ENCODE measurements at regions of chr21 and their contacts with region 1.

Region 1: GRCh38 chr21:45287438-45288391 is at the start of gene POFUT2:
- DNase-seq: peak; percentile 97
- H3K4me3 ChIP-seq: peak within 1 kb of the TSS; percentile 67 to 93 (median 79)
- H3K27ac ChIP-seq: peak within 1 kb of the TSS; percentile 56
- H3K4me1 ChIP-seq: peaks cover 20% of the 10 kb centered on the region
- H3K27me3 ChIP-seq: no peaks in the 10 kb centered on the region
- CTCF ChIP-seq: peak in 1 of 2 donors; percentile 2
- POLR2A ChIP-seq: peak; percentile 89
- total RNA-seq, gene POFUT2: 47.5 and 48.9 TPM in 2 replicates

Region 2: DNA sequence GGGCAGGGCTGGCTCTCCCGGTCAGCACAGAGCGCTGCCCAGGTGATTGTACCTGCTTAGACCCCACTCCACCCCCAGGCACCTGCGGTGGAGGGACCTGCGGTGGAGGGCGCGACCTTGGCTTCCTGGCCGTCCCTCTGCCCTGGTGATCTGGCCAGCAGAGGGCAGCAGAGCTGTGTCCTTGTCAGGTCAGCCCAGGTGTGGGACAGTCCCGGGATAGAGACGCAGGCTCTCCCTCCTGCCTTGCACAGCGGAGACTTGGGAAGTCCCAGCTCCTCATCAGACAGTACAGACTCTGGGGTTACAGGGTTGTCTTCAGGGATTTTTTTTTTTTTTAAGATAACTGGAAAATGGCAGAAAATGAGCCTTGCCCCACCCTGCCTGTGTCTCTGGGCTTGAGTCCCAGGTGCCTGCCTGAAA is 337.9 kb before region 1 on chr21:
- CTCF ChIA-PET with region 1: no interaction called
- POLR2A ChIA-PET with region 1: no interaction called
- dilution Hi-C with region 1: no loop called
- intact Hi-C with region 1: loop called (anchors 5 kb)
- DNase-seq: peak; percentile 54
- H3K4me3 ChIP-seq: no peak overlapping the region
- H3K27ac ChIP-seq: no peak overlapping the region
- H3K4me1 ChIP-seq: peaks cover 3% of the 10 kb centered on the region
- H3K27me3 ChIP-seq: no peaks in the 10 kb centered on the region
- CTCF ChIP-seq: peak; percentile 88 to 89
- POLR2A ChIP-seq: no peak

Region 3: DNA sequence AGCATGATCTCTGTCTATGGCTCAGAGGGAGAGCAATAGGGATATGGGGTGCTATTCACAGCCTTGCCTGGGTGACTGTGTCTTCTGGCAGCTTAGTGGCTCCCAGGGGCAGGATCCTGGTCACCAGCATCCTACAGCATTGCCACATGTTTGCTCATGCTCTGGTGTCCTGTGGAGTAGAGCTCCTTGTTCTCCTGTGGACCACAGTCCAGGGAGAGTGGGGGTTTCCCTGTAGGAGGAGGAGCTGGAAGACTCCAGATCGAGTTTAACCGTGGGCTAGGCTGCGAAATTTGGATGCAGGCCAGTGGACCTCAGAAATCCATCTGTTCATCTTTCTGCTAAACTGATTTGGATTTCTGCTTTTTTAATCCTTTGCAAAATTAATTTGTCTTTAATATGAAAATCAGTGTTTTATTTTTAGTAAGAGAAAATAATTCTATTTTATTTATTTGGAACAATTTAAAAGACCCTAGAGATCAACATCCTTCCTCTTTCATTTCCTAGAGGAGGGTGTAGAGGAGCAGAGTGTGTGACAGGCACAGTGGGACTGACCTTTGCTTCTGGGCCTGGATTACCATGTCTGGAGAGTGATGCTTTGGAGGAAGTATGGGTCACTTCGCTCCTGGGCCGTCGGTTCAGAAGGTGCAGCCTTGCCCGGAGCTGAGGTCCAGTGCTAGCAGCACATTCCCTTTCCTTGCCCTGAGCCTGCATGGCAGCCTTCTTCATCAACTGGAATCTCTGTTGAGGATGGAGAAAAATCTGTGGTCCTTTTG is 196.0 kb before region 1 on chr21:
- CTCF ChIA-PET with region 1: no interaction called
- POLR2A ChIA-PET with region 1: no interaction called
- dilution Hi-C with region 1: no loop called
- intact Hi-C with region 1: no loop called
- DNase-seq: no peak
- H3K4me3 ChIP-seq: no peak overlapping the region
- H3K27ac ChIP-seq: no peak overlapping the region
- H3K4me1 ChIP-seq: peaks cover 55% of the 10 kb centered on the region
- H3K27me3 ChIP-seq: no peaks in the 10 kb centered on the region
- CTCF ChIP-seq: no peak
- POLR2A ChIP-seq: no peak

Region 4: GRCh38 chr21:45330075-45330781 is 42.5 kb after region 1 on chr21:
- CTCF ChIA-PET with region 1: no interaction called
- POLR2A ChIA-PET with region 1: no interaction called
- dilution Hi-C with region 1: no loop called
- intact Hi-C with region 1: no loop called
- DNase-seq: no peak
- H3K4me3 ChIP-seq: no peak overlapping the region
- H3K27ac ChIP-seq: no peak overlapping the region
- H3K4me1 ChIP-seq: no peaks in the 10 kb centered on the region
- H3K27me3 ChIP-seq: no peaks in the 10 kb centered on the region
- CTCF ChIP-seq: no peak
- POLR2A ChIP-seq: no peak

Region 5: DNA sequence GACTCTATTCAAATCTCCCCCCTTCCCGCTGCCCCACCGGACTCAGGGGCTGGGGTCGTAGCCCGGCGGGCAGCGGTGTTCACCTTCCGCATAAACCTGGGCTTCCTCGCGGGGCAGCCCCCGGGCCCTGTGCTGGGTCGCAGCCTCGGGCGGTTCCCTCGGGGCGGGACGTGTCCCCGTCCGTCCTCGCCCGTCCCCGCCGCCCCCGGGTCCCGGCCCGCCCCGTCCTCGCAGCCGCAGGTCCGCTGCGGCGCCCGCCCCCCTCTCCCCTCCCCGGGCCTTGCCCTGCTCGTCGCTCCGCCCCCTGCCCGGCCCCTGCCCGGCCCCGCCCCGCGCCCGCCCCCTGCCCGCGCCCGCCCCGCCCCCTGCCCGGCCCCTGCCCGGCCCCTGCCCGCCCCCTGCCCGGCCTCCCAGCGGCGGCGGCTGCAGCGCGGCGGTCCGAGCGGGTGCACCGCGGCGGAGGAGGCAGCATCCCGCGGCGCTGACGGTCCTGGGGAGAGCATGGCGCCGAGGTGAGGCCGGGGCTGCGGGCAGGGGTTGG is 117.1 kb after region 1 on chr21 and contains the start of gene COL18A1:
- CTCF ChIA-PET with region 1: interaction called, 15 read pairs
- POLR2A ChIA-PET with region 1: interaction called, 3 read pairs
- dilution Hi-C with region 1: no loop called
- intact Hi-C with region 1: loop called (anchors 1 kb)
- DNase-seq: peak; percentile 39
- H3K4me3 ChIP-seq: peak within 1 kb of the TSS; percentile 72 to 87 (median 79)
- H3K27ac ChIP-seq: peak within 1 kb of the TSS; percentile 95
- H3K4me1 ChIP-seq: peaks cover 18% of the 10 kb centered on the region
- H3K27me3 ChIP-seq: no peaks in the 10 kb centered on the region
- CTCF ChIP-seq: no peak
- POLR2A ChIP-seq: no peak
- total RNA-seq, gene COL18A1: 252 and 274 TPM in 2 replicates

Region 6: GRCh38 chr21:45439161-45439872 is 151.6 kb after region 1 on chr21:
- CTCF ChIA-PET with region 1: interaction called, 34 read pairs
- POLR2A ChIA-PET with region 1: no interaction called
- dilution Hi-C with region 1: no loop called
- intact Hi-C with region 1: loop called (anchors 1 kb)
- DNase-seq: peak; percentile 91
- H3K4me3 ChIP-seq: peak overlapping the region in 2 of 3 experiments; percentile 7 to 26
- H3K27ac ChIP-seq: peak overlapping the region; percentile 82
- H3K4me1 ChIP-seq: peaks cover 15% of the 10 kb centered on the region
- H3K27me3 ChIP-seq: no peaks in the 10 kb centered on the region
- CTCF ChIP-seq: peak; percentile 94 to 96
- POLR2A ChIP-seq: no peak

Region 7: DNA sequence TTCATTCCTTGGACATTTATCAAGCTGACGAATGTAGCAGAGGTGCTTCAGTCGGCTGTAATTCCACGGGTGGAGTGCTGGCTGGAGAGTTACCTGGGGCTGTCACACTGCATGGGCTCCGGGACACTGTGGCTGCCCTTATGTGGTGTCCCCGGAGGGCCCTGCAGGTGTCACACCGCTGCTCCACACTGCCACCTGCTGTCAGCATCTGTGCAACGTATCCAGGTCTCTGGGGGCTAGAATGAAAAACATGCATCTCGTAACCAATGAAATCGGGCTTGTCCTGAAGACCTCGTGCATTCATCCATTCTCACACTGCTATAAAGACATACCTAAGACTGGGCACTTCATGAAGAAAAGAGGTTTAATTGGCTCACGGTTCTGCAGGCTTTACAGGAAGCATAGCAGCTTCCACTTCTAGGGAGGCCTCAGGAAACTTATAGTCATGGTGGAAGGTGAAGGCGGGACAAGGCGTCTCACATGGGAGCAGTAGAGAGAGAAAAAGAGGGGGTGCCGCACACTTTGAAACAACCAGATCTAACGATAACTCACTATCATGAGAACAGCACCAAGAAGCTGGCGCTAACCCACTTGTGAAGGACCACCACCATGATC is 309.1 kb after region 1 on chr21:
- CTCF ChIA-PET with region 1: interaction called, 17 read pairs
- POLR2A ChIA-PET with region 1: interaction called, 9 read pairs
- dilution Hi-C with region 1: no loop called
- intact Hi-C with region 1: loop called (anchors 1 kb)
- DNase-seq: peak; percentile 60
- H3K4me3 ChIP-seq: no peak overlapping the region
- H3K27ac ChIP-seq: no peak overlapping the region
- H3K4me1 ChIP-seq: no peaks in the 10 kb centered on the region
- H3K27me3 ChIP-seq: no peaks in the 10 kb centered on the region
- CTCF ChIP-seq: peak; percentile 78 to 92
- POLR2A ChIP-seq: no peak

Region 8: DNA sequence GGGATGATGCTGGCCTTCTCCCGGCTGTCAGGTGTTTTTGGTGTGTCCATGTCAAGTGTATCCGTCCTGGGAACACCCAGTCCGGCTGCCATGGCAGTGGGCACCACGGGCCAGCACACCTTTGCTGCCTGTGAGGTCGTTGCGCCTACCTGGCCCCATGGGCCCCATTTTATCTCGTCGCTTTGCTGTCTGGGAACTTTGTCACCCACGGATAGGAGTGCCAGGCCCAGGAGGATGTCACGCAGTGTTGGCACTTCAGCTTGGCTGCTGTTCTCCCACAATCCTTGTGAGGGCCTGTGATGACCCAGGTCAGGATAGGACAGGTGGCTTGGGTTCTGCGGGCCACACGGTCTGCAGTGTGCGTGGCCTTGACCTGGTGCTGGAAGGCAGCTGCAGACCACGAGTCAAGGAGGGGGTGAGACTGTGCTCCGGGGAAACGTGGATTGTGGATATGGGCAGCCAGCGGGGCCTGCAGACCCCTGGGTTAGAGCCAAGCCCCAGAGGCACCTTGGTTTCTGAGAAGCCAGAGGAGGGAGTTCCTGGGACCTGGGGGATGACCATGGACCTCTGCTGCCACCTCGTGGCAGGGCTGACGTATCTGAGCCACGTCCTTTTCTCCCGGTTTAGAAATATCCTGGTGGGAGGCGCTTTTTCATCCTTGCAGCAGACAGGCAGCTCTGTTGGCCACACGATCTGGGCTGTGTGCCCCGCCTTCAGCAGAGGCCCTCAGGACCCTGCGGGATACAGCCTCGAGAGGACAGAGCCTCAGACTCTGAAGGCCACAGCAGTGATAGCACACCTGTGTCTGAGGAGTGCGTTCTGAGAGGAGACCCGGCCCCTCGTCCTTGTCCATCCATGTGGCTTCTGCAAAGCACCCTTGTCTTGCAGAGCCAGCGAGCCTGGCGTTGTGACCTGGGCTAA is 532.7 kb after region 1 on chr21:
- CTCF ChIA-PET with region 1: interaction called, 5 read pairs
- POLR2A ChIA-PET with region 1: no interaction called
- dilution Hi-C with region 1: no loop called
- intact Hi-C with region 1: loop called (anchors 5 kb)
- DNase-seq: peak; percentile 60
- H3K4me3 ChIP-seq: no peak overlapping the region
- H3K27ac ChIP-seq: no peak overlapping the region
- H3K4me1 ChIP-seq: no peaks in the 10 kb centered on the region
- H3K27me3 ChIP-seq: peaks cover 3 to 4% of the 10 kb centered on the region in 2 experiments
- CTCF ChIP-seq: peak; percentile 77 to 87
- POLR2A ChIP-seq: no peak